ENCODE measurements at regions of chr19 and their contacts with region 1.

Region 1: GRCh38 chr19:40662921-40663694 is 27.3 kb downstream of the NUMBL start:
- DNase-seq: peak; percentile 95
- ATAC-seq: peak; percentile 88

Region 2: DNA sequence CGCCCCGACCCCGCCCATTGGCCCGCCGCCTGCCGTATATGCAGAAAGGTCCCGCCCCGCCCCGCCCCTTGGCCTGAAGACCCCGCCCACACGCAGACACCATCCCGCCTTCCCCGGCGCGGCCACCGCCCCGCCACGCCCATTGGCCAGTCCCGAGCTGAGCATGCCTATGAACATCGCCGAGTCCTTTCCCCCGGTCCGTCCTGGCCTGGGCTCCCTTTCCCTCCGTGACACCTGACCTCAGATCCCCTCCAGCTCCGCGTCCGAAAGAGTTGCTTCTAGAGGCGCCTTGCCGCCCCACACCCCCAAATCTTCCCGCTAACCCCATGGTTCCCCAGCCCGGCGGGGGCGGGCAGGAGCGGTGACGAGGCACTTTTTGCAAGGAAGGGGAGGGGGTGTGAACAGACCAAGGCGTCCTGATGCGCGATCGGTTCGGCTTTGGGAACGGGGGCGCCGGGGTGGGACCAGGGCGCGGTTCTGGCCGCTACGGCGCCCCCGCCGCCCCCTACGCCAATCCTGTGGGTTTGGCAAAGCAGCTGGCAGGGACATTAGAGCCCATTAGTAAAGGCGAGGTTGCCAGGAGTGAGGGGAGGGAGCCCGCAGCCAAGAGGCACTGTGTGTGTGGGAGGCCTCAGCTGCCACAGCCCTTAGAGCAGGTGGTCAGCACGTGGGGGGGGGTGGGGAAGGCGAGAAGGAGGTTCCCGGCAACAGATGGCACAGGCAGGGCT is 27.7 kb after region 1 on chr19:
- intact Hi-C with region 1: loop called (anchors 2 kb)
- DNase-seq: peak; percentile 98
- ATAC-seq: peak; percentile 92

Region 3: DNA sequence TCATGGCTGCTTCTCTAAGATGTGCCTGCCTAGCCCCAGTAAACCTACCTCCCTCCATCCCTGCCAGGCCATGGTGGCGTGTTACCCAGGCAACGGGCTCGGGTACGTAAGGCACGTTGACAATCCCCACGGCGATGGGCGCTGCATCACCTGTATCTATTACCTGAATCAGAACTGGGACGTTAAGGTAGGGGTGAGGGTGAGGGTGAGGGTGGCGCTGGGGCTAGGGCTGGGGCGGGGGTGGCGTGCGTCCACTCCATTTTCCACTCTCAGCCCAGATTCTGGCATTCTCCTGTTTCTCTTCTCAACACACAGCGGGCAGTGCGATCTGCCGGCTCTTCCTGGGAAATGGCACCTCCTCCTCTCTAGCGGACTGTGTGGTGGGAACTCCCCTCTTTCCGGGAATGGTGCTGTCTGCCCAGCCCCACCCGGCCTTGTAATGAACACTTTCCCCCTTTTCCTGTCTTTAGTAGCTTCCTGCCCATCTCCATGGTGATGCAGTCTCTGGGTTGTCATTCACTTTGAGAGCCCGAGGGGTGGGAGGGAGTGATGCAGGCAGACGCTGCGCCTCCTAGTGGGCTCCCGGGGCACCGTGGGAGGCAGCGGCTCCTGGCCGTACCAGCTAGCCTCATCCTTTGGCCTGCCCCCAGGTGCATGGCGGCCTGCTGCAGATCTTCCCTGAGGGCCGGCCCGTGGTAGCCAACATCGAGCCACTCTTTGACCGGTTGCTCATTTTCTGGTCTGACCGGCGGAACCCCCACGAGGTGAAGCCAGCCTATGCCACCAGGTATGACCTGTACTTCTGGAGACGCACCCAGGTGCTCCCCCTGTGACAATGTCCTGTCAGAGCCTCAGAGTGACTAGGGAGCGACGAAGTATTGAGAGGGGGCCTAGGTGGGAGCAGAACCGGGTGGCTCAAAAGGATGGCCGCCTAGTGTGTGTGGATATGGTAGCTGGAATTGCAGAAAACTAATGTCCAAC is 143.7 kb after region 1 on chr19:
- intact Hi-C with region 1: loop called (anchors 5 kb)
- DNase-seq: peak; percentile 88
- ATAC-seq: peak; percentile 21

Measured in Right ventricle myocardium inferior (tissue), 1 donor.